ENCODE measurements at regions of chr5 and their contacts with region 1.

Region 1: DNA sequence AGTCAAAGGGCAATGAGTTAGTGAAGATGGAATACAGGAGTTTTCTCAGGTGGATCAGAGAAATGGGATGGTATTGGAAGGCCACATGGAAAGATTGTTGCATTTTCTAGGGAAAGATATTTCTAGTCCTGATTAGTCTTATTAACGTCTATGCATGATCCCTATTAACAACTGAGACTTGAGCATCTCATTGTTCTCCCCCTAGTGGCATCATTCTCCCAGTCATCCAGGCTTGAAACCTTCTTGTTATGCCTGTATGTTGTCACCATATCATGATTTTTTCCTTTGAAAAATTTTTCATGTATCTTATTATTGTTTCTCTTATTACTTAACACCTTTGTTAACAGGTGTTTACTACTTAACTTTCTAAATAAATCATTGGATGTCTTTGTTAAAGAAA is 34.4 kb downstream of the KIF2A start:
- DNase-seq: no peak
- H3K4me3 Mint-ChIP-seq: no peak overlapping the region
- H3K27ac Mint-ChIP-seq: no peak overlapping the region
- H3K4me1 Mint-ChIP-seq: peaks cover 52% of the 10 kb centered on the region
- H3K27me3 Mint-ChIP-seq: no peaks in the 10 kb centered on the region

Region 2: GRCh38 chr5:62326302-62326701 is 14.1 kb before region 1 on chr5:
- CTCF ChIA-PET with region 1: interaction called, 3 read pairs
- intact Hi-C with region 1: loop called (anchors 1 kb)
- DNase-seq: no peak
- H3K4me3 Mint-ChIP-seq: no peak overlapping the region
- H3K27ac Mint-ChIP-seq: peak overlapping the region; percentile 21
- H3K4me1 Mint-ChIP-seq: peaks cover 71% of the 10 kb centered on the region
- H3K27me3 Mint-ChIP-seq: no peaks in the 10 kb centered on the region

Region 3: GRCh38 chr5:62376064-62376463 is 35.7 kb after region 1 on chr5:
- CTCF ChIA-PET with region 1: no interaction called
- intact Hi-C with region 1: no loop called
- DNase-seq: no peak
- H3K4me3 Mint-ChIP-seq: no peak overlapping the region
- H3K27ac Mint-ChIP-seq: peak overlapping the region; percentile 48
- H3K4me1 Mint-ChIP-seq: no peaks in the 10 kb centered on the region
- H3K27me3 Mint-ChIP-seq: no peaks in the 10 kb centered on the region